H1 (cell line): ENCODE measurements at regions of chr16 and their contacts with region 1.

Region 1: GRCh38 chr16:1331712-1332617 is 1.5 kb upstream of the BAIAP3 start:
- DNase-seq: peak in 1 of 2 experiments; percentile 91
- H3K4me3 ChIP-seq: peak overlapping the region; percentile 3 to 58 (median 42); a peak in 7 of 8 replicates
- H3K27ac ChIP-seq: peak overlapping the region; percentile 60
- H3K4me1 ChIP-seq: peaks cover 0 to 15% (median 13%) of the 10 kb centered on the region in 4 experiments; a peak in 4 of 7 replicates
- H3K27me3 ChIP-seq: peaks cover 19 to 51% (median 38%) of the 10 kb centered on the region in 4 experiments
- CTCF ChIP-seq: no peak
- EP300 ChIP-seq: peak in 1 of 2 experiments; percentile 69; a peak in 1 of 3 replicates
- POLR2A ChIP-seq: peak in 1 of 2 experiments; percentile 63; a peak in 1 of 3 replicates
- RAD21 ChIP-seq: no peak

Region 2: GRCh38 chr16:1288611-1289474 is 43.1 kb before region 1 on chr16:
- CTCF ChIA-PET with region 1: interaction called, 11 read pairs
- POLR2A ChIA-PET with region 1: interaction called, 4 read pairs
- DNase-seq: no peak
- H3K4me3 ChIP-seq: peak overlapping the region in 3 of 4 experiments; percentile 11 to 55 (median 12); a peak in 6 of 8 replicates
- H3K27ac ChIP-seq: no peak overlapping the region
- H3K4me1 ChIP-seq: peaks cover 3 to 24% (median 13%) of the 10 kb centered on the region in 4 experiments; a peak in 6 of 7 replicates
- H3K27me3 ChIP-seq: peaks cover 7 to 39% (median 26%) of the 10 kb centered on the region in 4 experiments
- CTCF ChIP-seq: no peak
- EP300 ChIP-seq: no peak
- POLR2A ChIP-seq: no peak
- RAD21 ChIP-seq: no peak

Region 3: DNA sequence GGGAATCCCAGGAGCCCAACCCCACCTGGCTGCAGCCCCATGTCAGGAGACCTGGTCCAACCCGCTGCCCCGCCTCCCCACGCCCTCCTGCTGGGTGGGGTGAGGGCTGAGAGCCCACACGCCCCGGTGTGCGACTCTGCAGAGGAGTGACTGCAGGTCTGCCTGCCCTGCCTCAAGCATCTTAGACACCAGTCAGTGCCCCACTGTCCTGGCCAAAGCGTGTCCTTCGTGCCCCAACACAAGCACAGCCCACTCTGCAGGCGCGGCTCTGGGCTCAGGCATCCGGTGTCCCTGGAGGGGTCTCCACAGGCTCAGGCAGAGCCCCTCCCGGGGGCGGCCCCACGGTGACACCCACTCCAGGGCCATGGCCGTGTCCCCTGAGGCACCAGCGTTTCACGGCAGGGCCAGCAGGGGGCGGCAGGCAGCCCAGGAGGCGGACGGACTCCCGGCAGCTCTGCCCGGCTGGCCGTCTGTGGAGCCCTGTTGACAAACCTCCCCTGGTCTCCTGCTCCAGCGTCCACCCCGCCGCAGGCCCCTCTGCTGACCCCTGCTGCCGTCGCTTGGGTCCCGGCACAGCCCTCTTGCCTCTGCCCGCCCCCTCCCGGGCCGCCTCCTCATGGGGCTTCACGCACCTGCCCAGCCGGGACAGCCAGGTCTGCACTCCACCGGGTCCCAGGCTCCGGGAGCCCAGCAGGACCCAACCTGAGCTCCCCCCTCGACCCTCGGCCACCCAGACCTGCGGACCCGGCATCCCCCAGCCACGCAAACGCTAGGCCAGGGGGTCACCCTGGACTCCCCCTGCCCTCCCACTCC is 31.1 kb before region 1 on chr16:
- CTCF ChIA-PET with region 1: interaction called, 13 read pairs
- POLR2A ChIA-PET with region 1: interaction called, 7 read pairs
- DNase-seq: peak in 1 of 2 experiments; percentile 94
- H3K4me3 ChIP-seq: peak overlapping the region in 1 of 4 experiments; percentile 29; a peak in 1 of 8 replicates
- H3K27ac ChIP-seq: no peak overlapping the region
- H3K4me1 ChIP-seq: peaks cover 0 to 16% (median 12%) of the 10 kb centered on the region in 4 experiments; a peak in 6 of 7 replicates
- H3K27me3 ChIP-seq: no peaks in the 10 kb centered on the region
- CTCF ChIP-seq: peak; percentile 69 to 98 (median 87)
- EP300 ChIP-seq: no peak
- POLR2A ChIP-seq: no peak
- RAD21 ChIP-seq: peak; percentile 38 to 55

Region 4: GRCh38 chr16:1308977-1309885 is 22.7 kb before region 1 on chr16 and contains the start of gene UBE2I:
- CTCF ChIA-PET with region 1: interaction called, 6 read pairs
- POLR2A ChIA-PET with region 1: interaction called, 106 read pairs
- DNase-seq: peak; percentile 87 to 99
- H3K4me3 ChIP-seq: peak within 1 kb of the TSS; percentile 89 to 98 (median 96)
- H3K27ac ChIP-seq: peak within 1 kb of the TSS; percentile 100
- H3K4me1 ChIP-seq: peaks cover 0 to 13% (median 6%) of the 10 kb centered on the region in 4 experiments; a peak in 6 of 7 replicates
- H3K27me3 ChIP-seq: no peaks in the 10 kb centered on the region
- CTCF ChIP-seq: no peak
- EP300 ChIP-seq: no peak
- POLR2A ChIP-seq: peak in 1 of 2 experiments; percentile 54; a peak in 1 of 3 replicates
- RAD21 ChIP-seq: no peak
- total RNA-seq, gene UBE2I: 268 and 272 TPM in 2 replicates

Region 5: GRCh38 chr16:1317479-1318267 is 14.3 kb before region 1 on chr16:
- CTCF ChIA-PET with region 1: interaction called, 11 read pairs
- POLR2A ChIA-PET with region 1: interaction called, 106 read pairs
- DNase-seq: no peak
- H3K4me3 ChIP-seq: no peak overlapping the region
- H3K27ac ChIP-seq: no peak overlapping the region
- H3K4me1 ChIP-seq: no peaks in the 10 kb centered on the region
- H3K27me3 ChIP-seq: no peaks in the 10 kb centered on the region
- CTCF ChIP-seq: no peak
- EP300 ChIP-seq: no peak
- POLR2A ChIP-seq: no peak
- RAD21 ChIP-seq: no peak

Region 6: GRCh38 chr16:1342526-1343427 is 10.8 kb after region 1 on chr16:
- CTCF ChIA-PET with region 1: interaction called, 52 read pairs
- POLR2A ChIA-PET with region 1: interaction called, 13 read pairs
- DNase-seq: peak; percentile 96 to 97
- H3K4me3 ChIP-seq: peak overlapping the region; percentile 32 to 59 (median 41); a peak in 7 of 8 replicates
- H3K27ac ChIP-seq: no peak overlapping the region
- H3K4me1 ChIP-seq: peaks cover 0 to 12% (median 3%) of the 10 kb centered on the region in 4 experiments; a peak in 4 of 7 replicates
- H3K27me3 ChIP-seq: peaks cover 0 to 8% (median 0%) of the 10 kb centered on the region in 4 experiments; a peak in 3 of 7 replicates
- CTCF ChIP-seq: no peak
- EP300 ChIP-seq: no peak
- POLR2A ChIP-seq: no peak
- RAD21 ChIP-seq: no peak

Region 7: DNA sequence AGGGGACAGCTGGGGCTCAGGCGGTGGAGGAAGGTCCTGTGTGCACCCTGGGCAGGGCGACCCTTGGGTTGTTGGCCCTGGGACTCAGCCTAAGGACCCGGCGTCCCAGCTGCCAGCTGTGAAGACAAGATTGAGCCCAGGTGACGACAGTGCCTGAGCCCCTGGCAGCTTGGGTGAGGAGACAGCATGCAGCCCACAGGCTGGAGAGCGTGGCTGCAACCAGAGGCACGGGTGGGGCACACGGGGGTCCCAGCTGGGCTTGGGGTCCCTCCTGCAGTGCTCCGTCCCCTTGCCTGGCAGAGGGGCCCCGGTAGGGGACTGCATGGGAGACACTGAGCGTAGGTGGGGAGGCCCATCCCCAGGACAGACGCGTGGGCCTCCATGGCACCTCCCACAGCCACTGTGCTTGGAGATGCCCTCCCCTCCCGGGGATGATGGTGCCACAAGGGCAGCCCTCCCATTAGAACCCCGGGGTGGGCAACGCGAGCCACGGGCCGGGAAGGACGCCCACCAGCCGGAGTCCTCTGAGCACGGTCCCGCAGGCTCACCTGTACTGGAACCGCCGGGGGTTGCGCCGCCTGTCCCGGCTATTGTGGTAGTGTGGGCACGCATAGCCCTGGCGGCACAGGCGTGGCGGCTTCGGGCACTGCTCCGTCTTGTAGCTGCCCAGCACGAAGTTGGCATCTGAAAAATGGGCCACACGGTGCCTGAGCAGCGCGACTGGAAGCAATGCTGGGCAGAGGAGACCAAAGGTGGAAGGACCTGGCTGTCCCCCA is 67.0 kb after region 1 on chr16:
- CTCF ChIA-PET with region 1: no interaction called
- POLR2A ChIA-PET with region 1: no interaction called
- DNase-seq: no peak
- H3K4me3 ChIP-seq: no peak overlapping the region
- H3K27ac ChIP-seq: no peak overlapping the region
- H3K4me1 ChIP-seq: no peaks in the 10 kb centered on the region
- H3K27me3 ChIP-seq: no peaks in the 10 kb centered on the region
- CTCF ChIP-seq: no peak
- EP300 ChIP-seq: no peak
- POLR2A ChIP-seq: no peak
- RAD21 ChIP-seq: no peak